Activated CD4-positive, alpha-beta memory T cell treated with anti-CD3 and anti-CD28 coated beads, Interleukin-2, amount 10 ng/mL, durations not matched to agents 7 days and 5 days (primary cell): ENCODE measurements at regions of chr1 and their contacts with region 1.

Region 1: GRCh38 chr1:29033829-29034466 is 89.8 kb downstream of the TMEM200B start:
- DNase-seq: no peak
- H3K4me3 Mint-ChIP-seq: no peak overlapping the region
- H3K27ac Mint-ChIP-seq: no peak overlapping the region
- H3K4me1 Mint-ChIP-seq: no peaks in the 10 kb centered on the region
- H3K27me3 Mint-ChIP-seq: no peaks in the 10 kb centered on the region

Region 2: GRCh38 chr1:28893403-28894102 is 140.4 kb before region 1 on chr1:
- CTCF ChIA-PET with region 1: interaction called, 24 read pairs
- POLR2A ChIA-PET with region 1: interaction called, 4 read pairs
- DNase-seq: peak; percentile 40
- H3K4me3 Mint-ChIP-seq: no peak overlapping the region
- H3K27ac Mint-ChIP-seq: no peak overlapping the region
- H3K4me1 Mint-ChIP-seq: peaks cover 12% of the 10 kb centered on the region
- H3K27me3 Mint-ChIP-seq: no peaks in the 10 kb centered on the region

Region 3: GRCh38 chr1:28933277-28933676 is 100.7 kb before region 1 on chr1:
- CTCF ChIA-PET with region 1: no interaction called
- POLR2A ChIA-PET with region 1: no interaction called
- DNase-seq: no peak
- H3K4me3 Mint-ChIP-seq: no peak overlapping the region
- H3K27ac Mint-ChIP-seq: no peak overlapping the region
- H3K4me1 Mint-ChIP-seq: peaks cover 31% of the 10 kb centered on the region
- H3K27me3 Mint-ChIP-seq: no peaks in the 10 kb centered on the region

Region 4: GRCh38 chr1:29096231-29096886 is 62.4 kb after region 1 on chr1:
- CTCF ChIA-PET with region 1: no interaction called
- POLR2A ChIA-PET with region 1: no interaction called
- DNase-seq: no peak
- H3K4me3 Mint-ChIP-seq: no peak overlapping the region
- H3K27ac Mint-ChIP-seq: no peak overlapping the region
- H3K4me1 Mint-ChIP-seq: no peaks in the 10 kb centered on the region
- H3K27me3 Mint-ChIP-seq: no peaks in the 10 kb centered on the region